CD8-positive, alpha-beta T cell (primary cell): ENCODE measurements at regions of chr12 and their contacts with region 1.

Region 1: GRCh38 chr12:22190969-22191368 is 143.5 kb downstream of the ST8SIA1 start:
- DNase-seq: no peak
- ATAC-seq: no peak
- H3K4me3 ChIP-seq: no peak overlapping the region
- H3K4me3 Mint-ChIP-seq: no peak overlapping the region
- H3K27ac ChIP-seq: no peak overlapping the region
- H3K27ac Mint-ChIP-seq: no peak overlapping the region
- H3K4me1 ChIP-seq: no peaks in the 10 kb centered on the region
- H3K4me1 Mint-ChIP-seq: no peaks in the 10 kb centered on the region
- H3K27me3 ChIP-seq: no peaks in the 10 kb centered on the region
- H3K27me3 Mint-ChIP-seq: no peaks in the 10 kb centered on the region
- CTCF ChIP-seq: no peak

Region 2: GRCh38 chr12:22029991-22030390 is 161.0 kb before region 1 on chr12:
- CTCF ChIA-PET with region 1: no interaction called
- POLR2A ChIA-PET with region 1: no interaction called
- intact Hi-C with region 1: no loop called
- DNase-seq: no peak
- ATAC-seq: no peak
- H3K4me3 ChIP-seq: no peak overlapping the region
- H3K4me3 Mint-ChIP-seq: no peak overlapping the region
- H3K27ac ChIP-seq: no peak overlapping the region
- H3K27ac Mint-ChIP-seq: no peak overlapping the region
- H3K4me1 ChIP-seq: no peaks in the 10 kb centered on the region
- H3K4me1 Mint-ChIP-seq: peaks cover 4% of the 10 kb centered on the region
- H3K27me3 ChIP-seq: no peaks in the 10 kb centered on the region
- H3K27me3 Mint-ChIP-seq: no peaks in the 10 kb centered on the region
- CTCF ChIP-seq: no peak

Region 3: DNA sequence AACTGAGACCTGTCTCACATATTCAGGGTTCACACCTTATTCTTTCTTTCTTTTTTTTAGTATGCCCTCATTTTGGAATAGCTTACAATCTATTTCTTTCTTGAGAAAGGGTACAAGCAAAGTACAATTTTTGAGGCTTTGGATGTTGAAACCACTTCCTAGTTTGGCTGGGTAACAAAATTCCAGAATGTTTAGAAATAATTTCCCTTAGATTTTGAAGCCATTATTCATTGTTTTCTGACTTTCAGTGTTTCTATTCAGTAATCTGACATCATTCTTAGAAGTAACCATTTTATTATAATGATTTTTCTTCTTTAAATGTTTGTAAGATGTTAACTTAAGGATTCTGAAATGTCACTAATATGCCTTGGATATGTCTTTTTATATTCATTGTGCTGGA is 115.3 kb after region 1 on chr12:
- CTCF ChIA-PET with region 1: no interaction called
- POLR2A ChIA-PET with region 1: no interaction called
- intact Hi-C with region 1: loop called in 1 of 2 experiments (anchors 5 kb)
- DNase-seq: no peak
- ATAC-seq: no peak
- H3K4me3 ChIP-seq: no peak overlapping the region
- H3K4me3 Mint-ChIP-seq: no peak overlapping the region
- H3K27ac ChIP-seq: no peak overlapping the region
- H3K27ac Mint-ChIP-seq: no peak overlapping the region
- H3K4me1 ChIP-seq: no peaks in the 10 kb centered on the region
- H3K4me1 Mint-ChIP-seq: no peaks in the 10 kb centered on the region
- H3K27me3 ChIP-seq: no peaks in the 10 kb centered on the region
- H3K27me3 Mint-ChIP-seq: peaks cover 13% of the 10 kb centered on the region
- CTCF ChIP-seq: no peak